ENCODE measurements at regions of chr7 and their contacts with region 1.

Region 1: GRCh38 chr7:40315277-40315676 is 180.5 kb downstream of the SUGCT start:
- H3K4me3 Mint-ChIP-seq: no peak overlapping the region
- H3K27ac Mint-ChIP-seq: no peak overlapping the region
- H3K4me1 Mint-ChIP-seq: no peaks in the 10 kb centered on the region
- H3K27me3 Mint-ChIP-seq: no peaks in the 10 kb centered on the region

Region 2: GRCh38 chr7:40239755-40240303 is 75.4 kb before region 1 on chr7:
- intact Hi-C with region 1: loop called (anchors 5 kb)
- H3K4me3 Mint-ChIP-seq: no peak overlapping the region
- H3K27ac Mint-ChIP-seq: no peak overlapping the region
- H3K4me1 Mint-ChIP-seq: no peaks in the 10 kb centered on the region
- H3K27me3 Mint-ChIP-seq: no peaks in the 10 kb centered on the region